ENCODE measurements at regions of chrX and their contacts with region 1.

Region 1: DNA sequence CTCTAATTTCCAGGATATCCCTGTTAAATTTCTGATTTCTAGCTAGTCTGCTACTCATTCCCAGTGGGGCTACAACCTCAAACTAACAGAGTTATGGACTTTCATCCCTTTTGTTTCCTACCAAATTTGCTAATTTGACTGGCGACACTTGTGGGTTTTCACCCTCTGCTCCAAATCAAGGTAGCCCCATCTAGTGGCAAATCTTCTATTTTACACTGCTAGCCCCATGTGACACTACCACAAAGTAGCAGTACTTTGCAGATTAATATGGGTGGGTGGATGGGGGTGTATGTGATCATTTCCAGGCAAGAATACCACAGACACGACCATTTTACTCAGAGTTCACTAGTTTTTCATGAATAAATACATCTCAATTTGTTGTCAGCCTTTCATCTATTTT is 150.3 kb downstream of the MSL3 start:
- DNase-seq: no peak
- ATAC-seq: 0 out of 2 replicates have a peak, but pooled peaks have one; percentile 35
- H3K4me3 ChIP-seq: no peak overlapping the region
- H3K27ac ChIP-seq: no peak overlapping the region
- H3K4me1 ChIP-seq: no peaks in the 10 kb centered on the region
- H3K27me3 ChIP-seq: no peaks in the 10 kb centered on the region
- CTCF ChIP-seq: no peak
- POLR2A ChIP-seq: no peak
- RAD21 ChIP-seq: no peak

Region 2: GRCh38 chrX:11704725-11705495 is 203.5 kb before region 1 on chrX:
- CTCF ChIA-PET with region 1: no interaction called
- POLR2A ChIA-PET with region 1: no interaction called
- dilution Hi-C with region 1: no loop called
- in situ Hi-C with region 1: no loop called
- intact Hi-C with region 1: no loop called
- DNase-seq: peak; percentile 5
- ATAC-seq: no peak
- H3K4me3 ChIP-seq: no peak overlapping the region
- H3K27ac ChIP-seq: no peak overlapping the region
- H3K4me1 ChIP-seq: no peaks in the 10 kb centered on the region
- H3K27me3 ChIP-seq: no peaks in the 10 kb centered on the region
- CTCF ChIP-seq: no peak
- POLR2A ChIP-seq: no peak
- RAD21 ChIP-seq: no peak

Region 3: GRCh38 chrX:11792461-11793421 is 115.6 kb before region 1 on chrX:
- CTCF ChIA-PET with region 1: no interaction called
- POLR2A ChIA-PET with region 1: no interaction called
- dilution Hi-C with region 1: no loop called
- in situ Hi-C with region 1: no loop called
- intact Hi-C with region 1: loop called (anchors 5 kb)
- DNase-seq: no peak
- ATAC-seq: no peak
- H3K4me3 ChIP-seq: no peak overlapping the region
- H3K27ac ChIP-seq: no peak overlapping the region
- H3K4me1 ChIP-seq: no peaks in the 10 kb centered on the region
- H3K27me3 ChIP-seq: no peaks in the 10 kb centered on the region
- CTCF ChIP-seq: no peak
- POLR2A ChIP-seq: no peak
- RAD21 ChIP-seq: no peak

Region 4: GRCh38 chrX:11929476-11929875 is 21.1 kb after region 1 on chrX:
- CTCF ChIA-PET with region 1: no interaction called
- POLR2A ChIA-PET with region 1: no interaction called
- dilution Hi-C with region 1: no loop called
- in situ Hi-C with region 1: no loop called
- intact Hi-C with region 1: no loop called
- DNase-seq: no peak
- ATAC-seq: no peak
- H3K4me3 ChIP-seq: no peak overlapping the region
- H3K27ac ChIP-seq: no peak overlapping the region
- H3K4me1 ChIP-seq: no peaks in the 10 kb centered on the region
- H3K27me3 ChIP-seq: no peaks in the 10 kb centered on the region
- CTCF ChIP-seq: no peak
- POLR2A ChIP-seq: no peak
- RAD21 ChIP-seq: no peak